ENCODE measurements at regions of chr17 and their contacts with region 1.

Region 1: GRCh38 chr17:28982131-28982951 is 23.5 kb downstream of the SEZ6 start:
- DNase-seq: no peak
- ATAC-seq: peak in 2 of 4 donors; percentile 22 to 27
- H3K4me3 ChIP-seq: no peak overlapping the region
- H3K27ac ChIP-seq: no peak overlapping the region
- H3K4me1 ChIP-seq: no peaks in the 10 kb centered on the region
- H3K27me3 ChIP-seq: no peaks in the 10 kb centered on the region
- CTCF ChIP-seq: no peak

Region 2: GRCh38 chr17:29042679-29043538 is 60.6 kb after region 1 on chr17 and contains the start of gene PIPOX:
- intact Hi-C with region 1: loop called in 1 of 2 experiments (anchors 5 kb)
- DNase-seq: no peak
- ATAC-seq: peak in 2 of 4 donors; percentile 21 to 32
- H3K4me3 ChIP-seq: peak within 1 kb of the TSS; percentile 18
- H3K27ac ChIP-seq: no peak within 1 kb of the TSS
- H3K4me1 ChIP-seq: peaks cover 5% of the 10 kb centered on the region
- H3K27me3 ChIP-seq: peaks cover 0 to 5% (median 4%) of the 10 kb centered on the region in 3 donors
- CTCF ChIP-seq: no peak
- total RNA-seq, gene PIPOX: 0.26 to 1.7 (median 0.91) TPM in 3 of 4 donors, not detected in the other

Measured in psoas muscle (tissue), 8 donors.